IMR-90 (cell line): ENCODE measurements at regions of chr9 and their contacts with region 1.

Region 1: DNA sequence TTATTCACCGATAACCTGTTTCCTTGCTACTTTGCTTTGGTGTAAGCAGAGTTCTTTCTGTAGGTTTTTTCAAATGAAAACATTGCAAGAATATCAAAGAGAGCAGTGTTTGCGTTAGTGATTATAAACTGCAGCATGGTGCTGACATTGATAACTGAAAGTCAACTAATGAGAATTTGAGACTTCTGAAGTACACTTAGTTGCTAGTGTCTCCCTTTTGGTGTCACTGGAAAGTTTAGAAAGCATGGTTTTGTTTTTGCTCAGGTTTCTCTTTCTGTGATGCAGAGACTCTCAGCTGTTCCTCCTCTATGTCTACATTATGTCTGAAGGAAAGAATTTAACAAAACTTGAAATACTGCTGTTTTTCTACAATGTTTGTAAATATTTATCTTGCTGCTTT is 80.2 kb upstream of the ZNF169 start:
- DNase-seq: no peak
- ATAC-seq: 0 out of 2 replicates have a peak, but pooled peaks have one; percentile 13
- H3K4me3 ChIP-seq: no peak overlapping the region
- H3K27ac ChIP-seq: no peak overlapping the region
- H3K4me1 ChIP-seq: peaks cover 10% of the 10 kb centered on the region
- H3K27me3 ChIP-seq: no peaks in the 10 kb centered on the region
- CTCF ChIP-seq: no peak
- POLR2A ChIP-seq: no peak
- RAD21 ChIP-seq: no peak

Region 2: DNA sequence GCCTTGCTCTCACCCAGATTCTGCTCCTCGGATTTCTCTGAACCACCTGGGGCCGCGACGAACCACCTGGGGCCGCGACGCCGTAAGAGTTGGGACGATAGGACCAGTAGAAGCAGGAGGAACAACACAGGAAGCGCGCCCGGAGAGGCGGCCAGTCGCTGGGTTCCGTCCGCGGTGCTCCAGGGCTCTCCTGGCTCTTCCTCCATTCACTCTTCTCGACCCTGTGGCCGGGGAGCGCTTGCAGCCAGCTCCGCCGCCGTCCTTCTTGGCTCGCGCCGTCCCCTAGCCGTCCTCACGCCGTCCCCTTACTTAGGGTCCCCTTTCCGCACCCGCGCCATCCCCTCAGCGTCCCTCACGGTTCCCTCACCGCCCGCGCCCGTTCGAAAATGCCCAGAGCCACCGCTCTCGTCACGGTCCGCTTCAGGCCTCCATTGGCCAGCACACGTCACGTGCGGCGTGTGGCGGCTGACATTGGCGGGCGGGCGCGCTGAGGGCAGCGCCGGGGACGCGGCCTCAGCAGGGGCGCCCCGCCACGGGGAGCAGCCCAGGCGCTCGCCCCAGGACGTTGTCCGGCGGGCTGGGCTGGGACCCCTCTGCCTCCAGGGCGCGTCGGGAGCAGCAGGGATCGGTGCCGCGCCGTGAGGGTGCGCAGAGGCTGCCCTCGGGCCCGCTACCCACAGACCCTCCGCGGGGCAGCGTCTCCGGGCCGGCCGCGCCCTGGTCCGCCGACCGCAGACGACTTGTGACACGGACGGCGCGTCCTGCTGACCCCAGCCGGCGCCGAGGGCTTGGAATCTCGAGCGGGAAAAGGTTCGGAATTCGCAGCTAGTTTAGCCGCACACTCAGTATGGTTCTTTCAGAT is 148.4 kb before region 1 on chr9:
- CTCF ChIA-PET with region 1: no interaction called
- POLR2A ChIA-PET with region 1: no interaction called
- dilution Hi-C with region 1: no loop called
- in situ Hi-C with region 1: no loop called
- intact Hi-C with region 1: no loop called
- DNase-seq: peak; percentile 79
- ATAC-seq: peak; percentile 100
- H3K4me3 ChIP-seq: peak overlapping the region; percentile 93
- H3K27ac ChIP-seq: peak overlapping the region; percentile 73
- H3K4me1 ChIP-seq: no peaks in the 10 kb centered on the region
- H3K27me3 ChIP-seq: no peaks in the 10 kb centered on the region
- CTCF ChIP-seq: no peak
- POLR2A ChIP-seq: peak; percentile 40; the same call in 1 of the 2 replicates
- RAD21 ChIP-seq: no peak

Region 3: GRCh38 chr9:94076557-94076956 is 102.4 kb before region 1 on chr9:
- CTCF ChIA-PET with region 1: no interaction called
- POLR2A ChIA-PET with region 1: no interaction called
- dilution Hi-C with region 1: no loop called
- in situ Hi-C with region 1: loop called (anchors 10 kb)
- intact Hi-C with region 1: no loop called
- DNase-seq: no peak
- ATAC-seq: no peak
- H3K4me3 ChIP-seq: no peak overlapping the region
- H3K27ac ChIP-seq: no peak overlapping the region
- H3K4me1 ChIP-seq: no peaks in the 10 kb centered on the region
- H3K27me3 ChIP-seq: no peaks in the 10 kb centered on the region
- CTCF ChIP-seq: no peak
- POLR2A ChIP-seq: no peak
- RAD21 ChIP-seq: no peak

Region 4: DNA sequence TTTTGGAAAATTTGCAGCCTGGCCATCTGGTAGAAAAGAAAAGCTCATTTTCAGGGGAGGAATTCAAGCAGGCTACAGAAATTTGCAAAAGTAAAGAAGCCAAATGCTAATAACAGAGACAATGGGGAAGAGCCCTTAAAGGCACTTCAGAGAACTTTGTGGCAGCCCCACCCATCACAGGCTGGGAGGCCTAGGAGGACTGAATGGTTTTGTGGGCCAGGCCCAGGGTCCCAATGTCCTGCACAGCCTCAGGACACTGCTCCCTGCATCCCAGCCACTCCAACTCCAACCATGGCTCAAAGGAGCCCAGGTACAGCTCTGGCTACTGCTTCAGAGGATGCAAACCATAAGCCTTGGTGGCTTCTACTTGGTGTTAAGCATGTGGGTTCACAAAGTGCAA is 50.3 kb before region 1 on chr9:
- CTCF ChIA-PET with region 1: no interaction called
- POLR2A ChIA-PET with region 1: no interaction called
- dilution Hi-C with region 1: no loop called
- in situ Hi-C with region 1: no loop called
- intact Hi-C with region 1: no loop called
- DNase-seq: no peak
- ATAC-seq: no peak
- H3K4me3 ChIP-seq: no peak overlapping the region
- H3K27ac ChIP-seq: no peak overlapping the region
- H3K4me1 ChIP-seq: no peaks in the 10 kb centered on the region
- H3K27me3 ChIP-seq: no peaks in the 10 kb centered on the region
- CTCF ChIP-seq: no peak
- POLR2A ChIP-seq: no peak
- RAD21 ChIP-seq: no peak